Heart left ventricle (tissue), 16 donors: ENCODE measurements at regions of chr2 and their contacts with region 1.

Region 1: GRCh38 chr2:229910832-229911412 is 10.9 kb downstream of the TRIP12 start:
- DNase-seq: no peak
- ATAC-seq: peak in 2 of 4 donors; percentile 35 to 47
- H3K4me3 ChIP-seq: no peak overlapping the region
- H3K27ac ChIP-seq: no peak overlapping the region
- H3K4me1 ChIP-seq: peaks cover 0 to 73% (median 54%) of the 10 kb centered on the region in 12 donors
- H3K27me3 ChIP-seq: no peaks in the 10 kb centered on the region
- CTCF ChIP-seq: peak in 7 of 12 donors; percentile 16 to 44 (median 28)
- POLR2A ChIP-seq: no peak

Region 2: GRCh38 chr2:229800997-229801754 is 109.7 kb before region 1 on chr2:
- intact Hi-C with region 1: loop called in 3 of 10 experiments (anchors 5 to 10 kb)
- DNase-seq: peak in 4 of 5 donors; percentile 30 to 58 (median 40)
- ATAC-seq: peak in 3 of 4 donors; percentile 41 to 61 (median 56)
- H3K4me3 ChIP-seq: no peak overlapping the region
- H3K27ac ChIP-seq: peak overlapping the region in 1 of 12 donors; percentile 7
- H3K4me1 ChIP-seq: peaks cover 0 to 31% (median 12%) of the 10 kb centered on the region in 12 donors
- H3K27me3 ChIP-seq: no peaks in the 10 kb centered on the region
- CTCF ChIP-seq: peak; percentile 59 to 83 (median 75)
- POLR2A ChIP-seq: no peak

Region 3: DNA sequence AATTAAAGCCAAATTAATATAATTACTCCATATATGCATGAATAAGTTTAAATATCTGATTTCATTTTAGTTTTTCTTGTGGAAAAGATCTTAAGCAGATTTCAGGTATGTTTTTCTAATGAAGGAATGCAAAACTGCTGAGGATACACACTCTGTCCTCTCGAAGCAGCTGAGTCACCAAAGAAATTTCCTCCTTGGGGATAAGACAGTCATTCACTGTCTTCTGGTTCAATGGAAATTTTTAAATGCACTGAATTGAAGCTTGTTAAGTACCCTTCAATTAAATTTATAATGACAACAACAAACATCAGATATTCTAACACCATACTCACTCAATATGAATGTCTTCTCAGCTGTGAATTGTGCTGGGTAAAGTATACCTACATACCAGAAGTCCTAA is 95.1 kb before region 1 on chr2:
- intact Hi-C with region 1: loop called in 1 of 10 experiments (anchors 10 kb)
- DNase-seq: no peak
- ATAC-seq: no peak
- H3K4me3 ChIP-seq: no peak overlapping the region
- H3K27ac ChIP-seq: peak overlapping the region in 1 of 12 donors; percentile 4
- H3K4me1 ChIP-seq: peaks cover 0 to 12% (median 0%) of the 10 kb centered on the region in 12 donors
- H3K27me3 ChIP-seq: no peaks in the 10 kb centered on the region
- CTCF ChIP-seq: no peak
- POLR2A ChIP-seq: no peak

Region 4: DNA sequence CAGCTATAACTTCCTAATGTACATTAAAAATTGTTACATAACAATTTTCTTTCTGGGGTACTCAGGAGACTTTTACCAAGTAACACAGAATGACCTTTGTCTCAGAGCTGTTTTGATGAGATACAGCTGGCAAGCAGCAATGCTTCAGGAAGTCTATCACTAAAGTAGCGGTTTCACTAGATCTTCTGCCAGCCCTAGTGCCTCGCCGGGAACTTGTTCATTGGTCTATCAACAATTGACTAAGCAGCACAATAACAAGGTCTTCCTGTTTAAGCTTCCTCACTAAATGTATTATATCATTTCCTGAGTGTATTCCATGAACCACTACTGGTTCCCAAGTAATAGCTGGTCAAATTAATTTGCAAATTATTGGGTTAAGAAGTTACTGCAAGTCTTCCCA is 58.4 kb before region 1 on chr2:
- intact Hi-C with region 1: loop called in 2 of 10 experiments (anchors 5 to 10 kb)
- DNase-seq: peak in 4 of 5 donors; percentile 38 to 56 (median 46)
- ATAC-seq: peak; percentile 55 to 94 (median 85)
- H3K4me3 ChIP-seq: no peak overlapping the region
- H3K27ac ChIP-seq: peak overlapping the region in 6 of 12 donors; percentile 9 to 70 (median 26)
- H3K4me1 ChIP-seq: peaks cover 0 to 55% (median 24%) of the 10 kb centered on the region in 12 donors
- H3K27me3 ChIP-seq: no peaks in the 10 kb centered on the region
- CTCF ChIP-seq: no peak
- POLR2A ChIP-seq: no peak

Region 5: GRCh38 chr2:230268606-230269243 is 357.8 kb after region 1 on chr2:
- intact Hi-C with region 1: no loop called
- DNase-seq: no peak
- ATAC-seq: no peak
- H3K4me3 ChIP-seq: no peak overlapping the region
- H3K27ac ChIP-seq: peak overlapping the region in 3 of 12 donors; percentile 5 to 34 (median 15)
- H3K4me1 ChIP-seq: peaks cover 0 to 16% (median 0%) of the 10 kb centered on the region in 12 donors
- H3K27me3 ChIP-seq: no peaks in the 10 kb centered on the region
- CTCF ChIP-seq: no peak
- POLR2A ChIP-seq: no peak

Region 6: DNA sequence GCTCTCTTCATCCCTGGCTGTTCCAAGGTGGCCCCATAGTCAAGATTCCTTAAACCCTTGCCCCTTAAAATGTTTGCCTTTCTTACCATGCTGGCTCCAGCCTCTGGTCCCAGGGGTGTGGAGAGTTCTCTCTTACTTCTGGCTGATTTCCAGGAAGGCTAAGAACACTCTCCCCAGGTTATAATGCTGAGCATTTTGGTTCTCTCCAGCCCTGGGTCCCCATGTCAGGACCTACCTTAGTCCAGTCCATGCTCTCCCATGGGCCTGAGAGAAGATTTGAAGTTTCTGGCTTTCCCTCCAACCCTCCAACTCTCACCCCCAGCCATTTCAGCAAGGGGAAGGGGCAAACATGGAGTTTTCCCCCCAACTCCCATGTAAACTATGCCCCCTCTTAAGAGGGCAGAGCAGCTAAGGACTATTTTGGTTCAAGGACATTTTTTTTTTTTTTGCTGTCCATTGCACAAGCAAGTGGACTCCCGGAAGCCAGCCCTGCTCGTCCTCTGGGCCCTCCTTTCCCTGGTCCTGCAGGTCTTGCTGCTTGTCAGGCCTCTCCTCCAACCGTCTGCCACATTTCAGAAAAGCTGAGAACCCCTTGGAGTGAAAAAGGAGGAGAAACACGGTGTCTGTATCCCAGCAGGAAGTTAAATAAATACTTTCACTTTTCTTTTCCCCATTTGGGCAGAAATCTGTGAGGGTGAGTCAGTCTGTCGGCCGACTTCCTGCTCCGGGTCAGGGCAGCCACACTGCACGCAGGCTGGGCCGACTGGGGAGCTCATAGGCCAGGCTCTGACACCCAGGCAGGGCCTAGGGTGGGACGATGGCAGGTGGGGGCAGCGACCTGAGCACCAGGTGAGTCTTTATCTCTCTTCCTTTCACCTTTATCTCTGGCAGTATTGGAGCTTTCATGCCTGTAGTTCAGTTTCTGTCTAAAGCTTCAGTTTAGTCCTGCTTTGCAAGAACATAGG is 415.8 kb after region 1 on chr2 and contains the start of gene SP140L:
- intact Hi-C with region 1: loop called in 1 of 10 experiments (anchors 5 kb)
- DNase-seq: peak; percentile 71 to 87 (median 79)
- ATAC-seq: peak; percentile 82 to 96 (median 94)
- H3K4me3 ChIP-seq: peak within 1 kb of the TSS; percentile 9 to 70 (median 50)
- H3K27ac ChIP-seq: peak within 1 kb of the TSS in 11 of 12 donors; percentile 59 to 96 (median 81)
- H3K4me1 ChIP-seq: peaks cover 0 to 61% (median 11%) of the 10 kb centered on the region in 12 donors
- H3K27me3 ChIP-seq: no peaks in the 10 kb centered on the region
- CTCF ChIP-seq: no peak
- POLR2A ChIP-seq: no peak
- total RNA-seq, gene SP140L: 2.5 to 17.6 (median 4.0) TPM